ENCODE measurements at regions of chr17 and their contacts with region 1.

Region 1: GRCh38 chr17:35011671-35012210 is 31.4 kb downstream of the LIG3 start:
- DNase-seq: no peak
- H3K4me3 ChIP-seq: no peak overlapping the region
- H3K27ac ChIP-seq: no peak overlapping the region
- H3K4me1 ChIP-seq: no peaks in the 10 kb centered on the region
- H3K27me3 ChIP-seq: no peaks in the 10 kb centered on the region
- CTCF ChIP-seq: no peak
- EP300 ChIP-seq: no peak
- RAD21 ChIP-seq: no peak

Region 2: DNA sequence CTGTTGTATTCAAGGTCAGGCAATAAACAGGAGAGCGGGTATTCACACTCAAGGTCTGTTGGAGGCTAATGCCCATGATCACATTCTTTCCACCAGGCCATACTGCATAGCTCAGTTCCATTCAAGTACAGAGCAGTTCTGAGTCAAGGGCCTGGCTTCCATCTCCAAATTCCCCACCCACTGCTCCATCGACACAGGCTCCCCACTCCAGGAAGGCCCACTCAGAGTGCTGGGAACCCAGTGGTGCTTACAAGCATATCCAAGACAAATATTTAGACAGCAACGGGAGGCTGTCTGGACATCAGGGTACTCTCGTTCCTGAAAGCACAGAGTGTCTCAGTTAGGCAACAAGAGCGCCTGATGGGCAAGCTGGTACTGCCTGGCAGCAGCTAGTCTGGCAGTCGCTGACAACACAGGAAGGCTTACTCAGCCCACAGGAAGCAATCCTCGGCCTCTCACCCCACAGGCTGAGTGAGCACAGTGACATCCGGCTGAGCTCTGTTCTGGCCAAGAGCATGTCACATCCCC is 10.9 kb after region 1 on chr17:
- CTCF ChIA-PET with region 1: interaction called, 13 read pairs
- POLR2A ChIA-PET with region 1: interaction called, 5 read pairs
- DNase-seq: no peak
- H3K4me3 ChIP-seq: no peak overlapping the region
- H3K27ac ChIP-seq: peak overlapping the region; percentile 58 to 93
- H3K4me1 ChIP-seq: peaks cover 0 to 23% of the 10 kb centered on the region in 2 experiments; a peak in 3 of 4 replicates
- H3K27me3 ChIP-seq: no peaks in the 10 kb centered on the region
- CTCF ChIP-seq: peak; percentile 44
- EP300 ChIP-seq: no peak
- RAD21 ChIP-seq: no peak

Measured in SK-N-SH (cell line).